Cardiac septum (tissue), 1 donor: ENCODE measurements at regions of chr19 and their contacts with region 1.

Region 1: GRCh38 chr19:23273590-23274413 is 23.6 kb upstream of the ZNF724 start:
- DNase-seq: peak; percentile 93

Region 2: DNA sequence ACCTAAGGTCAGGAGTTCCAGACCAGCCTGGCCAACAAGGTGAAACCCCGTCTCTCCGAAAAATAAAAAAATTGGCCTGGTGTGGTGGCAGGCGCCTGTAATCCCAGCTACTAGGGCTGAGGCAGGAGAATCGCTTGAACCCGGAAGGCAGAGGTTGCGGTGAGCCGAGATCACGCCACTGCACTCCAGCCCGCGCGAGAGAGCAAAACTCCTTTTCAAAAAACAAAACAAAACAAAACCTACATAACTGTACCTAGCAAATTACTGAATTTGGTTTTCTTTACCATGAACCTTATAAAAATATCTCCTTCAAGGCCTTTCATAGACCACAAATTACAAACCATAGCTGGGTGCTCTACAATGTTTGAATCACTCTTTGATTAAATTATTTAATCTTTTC is 120.7 kb after region 1 on chr19:
- intact Hi-C with region 1: loop called (anchors 5 kb)
- DNase-seq: no peak

Region 3: DNA sequence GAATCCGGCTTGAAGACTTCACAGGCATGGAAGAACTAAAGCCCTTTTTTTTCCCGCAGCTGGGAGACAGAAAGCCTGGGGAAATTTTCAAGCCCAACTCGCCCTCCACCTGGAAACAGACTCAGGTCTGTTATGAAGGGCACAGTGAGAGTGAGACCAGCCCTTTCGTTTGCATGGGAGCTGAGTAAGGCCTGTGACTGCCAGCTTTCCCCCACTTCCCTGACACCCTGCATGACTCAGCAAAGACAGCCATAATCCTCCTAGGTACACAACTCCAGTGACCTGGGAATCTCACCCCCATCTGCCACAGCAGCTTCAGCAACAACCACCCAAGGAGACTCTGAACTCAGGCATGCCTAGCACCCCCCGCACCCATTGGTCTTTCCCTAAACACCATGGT is 209.0 kb after region 1 on chr19:
- intact Hi-C with region 1: no loop called
- DNase-seq: no peak